Naive thymus-derived CD4-positive, alpha-beta T cell (primary cell): ENCODE measurements at regions of chr12 and their contacts with region 1.

Region 1: GRCh38 chr12:26937875-26938700 is at the starts of genes FGFR1OP2 and INTS13:
- DNase-seq: peak; percentile 82 to 96 (median 93)
- ATAC-seq: peak; percentile 95
- H3K4me3 ChIP-seq: peak within 1 kb of the TSS; percentile 96
- H3K4me3 Mint-ChIP-seq: peak within 1 kb of the TSS; percentile 87 to 99 (median 97)
- H3K27ac ChIP-seq: peak within 1 kb of the TSS; percentile 94
- H3K27ac Mint-ChIP-seq: peak within 1 kb of the TSS; percentile 91 to 99 (median 95)
- H3K4me1 ChIP-seq: peaks cover 32 to 35% of the 10 kb centered on the region in 2 donors
- H3K4me1 Mint-ChIP-seq: peaks cover 42 to 79% (median 68%) of the 10 kb centered on the region in 7 donors
- H3K27me3 ChIP-seq: no peaks in the 10 kb centered on the region
- H3K27me3 Mint-ChIP-seq: peaks cover 0 to 3% (median 0%) of the 10 kb centered on the region in 5 donors
- total RNA-seq, gene FGFR1OP2: 35.6 to 84.0 (median 79.0) TPM
- total RNA-seq, gene INTS13: 13.2 to 46.7 (median 19.0) TPM

Region 2: GRCh38 chr12:26113853-26114719 is 824.0 kb before region 1 on chr12:
- CTCF ChIA-PET with region 1: no interaction called
- POLR2A ChIA-PET with region 1: no interaction called
- intact Hi-C with region 1: loop called in 1 of 2 experiments (anchors 2 kb)
- DNase-seq: peak; percentile 48 to 70 (median 65)
- ATAC-seq: peak; percentile 88
- H3K4me3 ChIP-seq: peak overlapping the region; percentile 53
- H3K4me3 Mint-ChIP-seq: peak overlapping the region; percentile 72 to 90 (median 82)
- H3K27ac ChIP-seq: peak overlapping the region; percentile 54
- H3K27ac Mint-ChIP-seq: peak overlapping the region in 7 of 9 donors; percentile 44 to 83 (median 63)
- H3K4me1 ChIP-seq: peaks cover 0 to 5% of the 10 kb centered on the region in 2 donors
- H3K4me1 Mint-ChIP-seq: peaks cover 5 to 14% (median 8%) of the 10 kb centered on the region in 7 donors
- H3K27me3 ChIP-seq: no peaks in the 10 kb centered on the region
- H3K27me3 Mint-ChIP-seq: peaks cover 2 to 80% (median 32%) of the 10 kb centered on the region in 5 donors

Region 3: GRCh38 chr12:26853303-26854030 is 84.6 kb before region 1 on chr12:
- CTCF ChIA-PET with region 1: no interaction called
- POLR2A ChIA-PET with region 1: no interaction called
- intact Hi-C with region 1: loop called in 1 of 2 experiments (anchors 2 kb)
- DNase-seq: peak; percentile 47 to 73 (median 69)
- ATAC-seq: peak; percentile 95
- H3K4me3 ChIP-seq: no peak overlapping the region
- H3K4me3 Mint-ChIP-seq: no peak overlapping the region
- H3K27ac ChIP-seq: no peak overlapping the region
- H3K27ac Mint-ChIP-seq: peak overlapping the region in 2 of 9 donors; percentile 1 to 81
- H3K4me1 ChIP-seq: no peaks in the 10 kb centered on the region
- H3K4me1 Mint-ChIP-seq: peaks cover 0 to 4% (median 0%) of the 10 kb centered on the region in 7 donors
- H3K27me3 ChIP-seq: no peaks in the 10 kb centered on the region
- H3K27me3 Mint-ChIP-seq: peaks cover 0 to 23% (median 0%) of the 10 kb centered on the region in 5 donors

Region 4: GRCh38 chr12:27014085-27014858 is 76.2 kb after region 1 on chr12 and contains the start of gene TM7SF3:
- CTCF ChIA-PET with region 1: interaction called, 3 read pairs
- POLR2A ChIA-PET with region 1: interaction called, 7 read pairs
- intact Hi-C with region 1: loop called (anchors 1 kb)
- DNase-seq: peak; percentile 96 to 98 (median 97)
- ATAC-seq: peak; percentile 95
- H3K4me3 ChIP-seq: peak within 1 kb of the TSS; percentile 92
- H3K4me3 Mint-ChIP-seq: peak within 1 kb of the TSS; percentile 80 to 97 (median 94)
- H3K27ac ChIP-seq: peak within 1 kb of the TSS; percentile 84
- H3K27ac Mint-ChIP-seq: peak within 1 kb of the TSS; percentile 88 to 97 (median 96)
- H3K4me1 ChIP-seq: peaks cover 24 to 29% of the 10 kb centered on the region in 2 donors
- H3K4me1 Mint-ChIP-seq: peaks cover 22 to 60% (median 51%) of the 10 kb centered on the region in 7 donors
- H3K27me3 ChIP-seq: no peaks in the 10 kb centered on the region
- H3K27me3 Mint-ChIP-seq: no peaks in the 10 kb centered on the region
- total RNA-seq, gene TM7SF3: 24.4 to 57.3 (median 28.5) TPM

Region 5: GRCh38 chr12:27305673-27306456 is 367.8 kb after region 1 on chr12:
- CTCF ChIA-PET with region 1: interaction called, 3 read pairs
- POLR2A ChIA-PET with region 1: no interaction called
- intact Hi-C with region 1: loop called in 1 of 2 experiments (anchors 5 kb)
- DNase-seq: peak in 6 of 9 donors; percentile 20 to 48 (median 34)
- ATAC-seq: no peak
- H3K4me3 ChIP-seq: no peak overlapping the region
- H3K4me3 Mint-ChIP-seq: no peak overlapping the region
- H3K27ac ChIP-seq: no peak overlapping the region
- H3K27ac Mint-ChIP-seq: peak overlapping the region in 6 of 9 donors; percentile 1 to 67 (median 16)
- H3K4me1 ChIP-seq: no peaks in the 10 kb centered on the region
- H3K4me1 Mint-ChIP-seq: peaks cover 0 to 15% (median 0%) of the 10 kb centered on the region in 7 donors
- H3K27me3 ChIP-seq: no peaks in the 10 kb centered on the region
- H3K27me3 Mint-ChIP-seq: no peaks in the 10 kb centered on the region

Region 6: DNA sequence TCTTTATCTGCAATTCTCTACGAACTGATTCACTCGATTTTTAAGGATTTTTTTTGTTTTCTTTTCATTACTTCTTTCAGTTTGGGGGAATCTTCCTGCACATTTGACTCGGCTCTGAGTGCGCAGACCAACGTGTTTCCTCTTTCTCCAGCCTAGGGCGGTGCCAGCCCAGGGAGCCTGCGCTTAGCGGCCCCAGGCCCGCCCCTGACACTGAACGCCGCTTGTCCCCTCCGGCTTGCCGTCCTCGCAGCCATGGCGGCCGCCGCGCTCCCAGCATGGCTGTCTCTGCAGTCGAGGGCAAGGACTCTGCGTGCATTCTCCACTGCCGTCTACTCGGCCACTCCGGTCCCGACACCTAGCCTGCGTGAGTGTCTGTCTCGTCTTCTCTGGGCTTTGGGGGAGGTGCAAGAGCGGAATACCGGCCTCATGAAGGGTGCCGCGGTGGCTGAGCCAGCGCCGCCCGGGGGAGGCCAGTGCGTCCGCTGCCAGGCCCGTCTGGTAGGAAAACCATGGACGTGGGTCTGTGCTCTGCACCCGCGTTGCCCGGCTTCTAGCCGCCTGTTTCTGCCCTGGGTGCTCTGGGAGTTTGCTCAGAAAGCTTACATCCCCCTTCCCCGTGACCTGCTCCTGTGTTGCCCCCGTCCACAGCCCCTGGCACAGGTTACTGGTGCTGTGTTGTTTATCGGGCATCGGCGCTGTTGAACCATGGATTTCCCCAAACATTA is 772.7 kb after region 1 on chr12 and contains the start of gene MRPS35:
- CTCF ChIA-PET with region 1: no interaction called
- POLR2A ChIA-PET with region 1: no interaction called
- intact Hi-C with region 1: loop called (anchors 1 kb)
- DNase-seq: peak; percentile 86 to 94 (median 92)
- ATAC-seq: peak; percentile 100
- H3K4me3 ChIP-seq: peak within 1 kb of the TSS; percentile 98
- H3K4me3 Mint-ChIP-seq: peak within 1 kb of the TSS; percentile 94 to 100 (median 98)
- H3K27ac ChIP-seq: peak within 1 kb of the TSS; percentile 85
- H3K27ac Mint-ChIP-seq: peak within 1 kb of the TSS; percentile 91 to 100 (median 98)
- H3K4me1 ChIP-seq: peaks cover 7 to 13% of the 10 kb centered on the region in 2 donors
- H3K4me1 Mint-ChIP-seq: peaks cover 21 to 46% (median 39%) of the 10 kb centered on the region in 7 donors
- H3K27me3 ChIP-seq: no peaks in the 10 kb centered on the region
- H3K27me3 Mint-ChIP-seq: peaks cover 0 to 18% (median 0%) of the 10 kb centered on the region in 5 donors
- total RNA-seq, gene MRPS35: 19.9 to 35.7 (median 23.5) TPM